OCI-LY7 (cell line): ENCODE measurements at regions of chr5 and their contacts with region 1.

Region 1: GRCh38 chr5:144191998-144192397 is 21.3 kb downstream of the KCTD16 start:
- DNase-seq: peak; percentile 87
- H3K4me3 ChIP-seq: peak overlapping the region; percentile 41
- H3K27ac ChIP-seq: no peak overlapping the region
- H3K4me1 ChIP-seq: peaks cover 26% of the 10 kb centered on the region
- CTCF ChIP-seq: peak; percentile 88

Region 2: DNA sequence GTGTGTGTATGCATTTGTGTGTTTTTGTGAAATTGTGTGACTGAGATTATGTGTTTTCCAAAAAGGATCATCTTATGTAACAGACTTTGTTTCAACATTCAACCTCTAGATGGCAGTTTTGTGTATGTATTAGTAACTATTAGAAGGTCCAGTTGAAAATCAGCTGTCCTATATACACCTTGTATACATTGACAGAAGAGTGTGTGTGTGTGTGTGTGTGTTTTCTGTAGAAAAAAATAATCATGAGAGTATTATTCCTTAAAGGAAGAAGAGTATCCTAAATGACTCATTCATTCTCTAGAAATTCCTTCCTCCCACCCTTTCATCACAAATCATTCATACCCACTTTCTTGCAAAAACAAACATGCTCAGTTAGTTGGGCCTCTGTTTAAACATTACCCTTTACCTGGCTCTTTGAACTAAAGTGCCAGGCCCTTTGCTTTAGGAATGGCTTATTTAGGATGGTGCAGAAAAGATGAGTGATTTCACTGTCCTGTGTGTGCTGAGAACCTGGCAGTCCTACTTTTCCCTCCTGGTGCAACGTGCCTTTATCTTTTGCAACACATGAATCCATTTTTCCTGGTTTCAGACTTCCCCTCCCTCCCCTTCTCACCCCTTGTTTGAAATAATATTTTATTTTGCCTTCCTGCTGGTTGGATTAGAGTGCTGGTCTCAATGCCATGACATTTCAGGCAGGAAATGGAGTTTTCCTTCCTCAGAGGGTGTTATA is 1269.6 kb before region 1 on chr5:
- CTCF ChIA-PET with region 1: no interaction called
- POLR2A ChIA-PET with region 1: no interaction called
- intact Hi-C with region 1: loop called (anchors 10 kb)
- DNase-seq: peak; percentile 64
- H3K4me3 ChIP-seq: no peak overlapping the region
- H3K27ac ChIP-seq: no peak overlapping the region
- H3K4me1 ChIP-seq: no peaks in the 10 kb centered on the region
- CTCF ChIP-seq: peak; percentile 81

Region 3: DNA sequence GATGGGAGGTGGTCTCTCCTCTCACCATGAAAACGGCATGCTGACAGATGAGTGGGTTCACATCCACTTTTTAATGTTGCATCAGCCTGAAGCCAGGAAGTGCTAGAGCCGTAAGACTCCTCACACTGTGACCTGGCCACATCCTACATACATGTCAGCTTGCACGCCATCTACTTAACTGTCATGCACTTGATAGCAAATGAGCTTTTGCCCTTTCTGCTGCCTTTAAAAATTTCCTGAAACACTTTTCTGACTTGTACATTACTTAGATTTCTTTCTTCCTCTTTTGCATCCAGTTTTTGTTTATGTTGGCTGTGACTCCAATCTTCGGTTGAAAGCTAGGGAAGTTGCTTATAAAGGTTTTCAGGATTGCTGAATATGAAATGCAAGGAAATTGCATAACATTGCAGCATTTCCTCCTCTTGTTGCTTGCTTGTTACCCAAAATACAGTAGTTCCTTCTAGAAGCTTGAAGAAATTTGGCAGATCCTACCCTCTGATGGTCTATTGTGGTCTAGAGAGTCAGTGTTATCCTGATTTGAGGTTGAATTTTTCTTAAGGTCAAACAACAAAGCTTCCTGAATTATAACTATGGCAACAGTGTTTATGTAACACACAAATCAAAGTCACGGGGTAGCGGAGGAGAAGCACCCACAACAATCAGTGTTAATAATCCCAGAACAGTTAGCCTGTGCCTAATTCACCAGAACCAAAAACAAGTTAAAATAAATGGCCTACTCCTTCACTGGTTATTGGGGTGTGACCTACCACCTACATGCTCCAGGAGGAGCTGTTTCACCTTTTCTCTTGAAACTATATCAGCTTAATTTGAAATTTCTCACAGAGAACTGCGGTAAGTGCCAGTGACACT is 1189.3 kb before region 1 on chr5:
- CTCF ChIA-PET with region 1: no interaction called
- POLR2A ChIA-PET with region 1: interaction called, 3 read pairs
- intact Hi-C with region 1: loop called (anchors 10 kb)
- DNase-seq: peak; percentile 91
- H3K4me3 ChIP-seq: no peak overlapping the region
- H3K27ac ChIP-seq: peak overlapping the region; percentile 60
- H3K4me1 ChIP-seq: peaks cover 47% of the 10 kb centered on the region
- CTCF ChIP-seq: peak; percentile 75

Region 4: DNA sequence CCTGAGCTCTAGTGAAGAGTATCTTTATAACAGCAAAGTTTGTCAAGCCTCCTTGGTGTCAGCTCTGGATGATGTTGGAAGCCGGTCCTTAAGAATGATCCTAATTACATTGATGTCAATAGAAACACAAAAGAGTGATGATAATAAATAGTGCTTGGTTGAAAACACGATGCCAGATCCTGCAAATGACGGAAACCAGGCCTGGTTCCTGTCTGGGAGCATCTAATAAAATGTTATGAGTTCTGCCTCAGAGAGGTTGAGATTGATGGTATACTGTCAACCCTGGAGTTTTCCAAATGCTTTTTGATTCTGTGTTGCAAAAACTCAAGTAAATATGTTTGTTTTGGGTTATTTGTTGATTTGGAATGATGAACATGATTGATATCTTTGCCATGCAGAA is 356.7 kb before region 1 on chr5:
- CTCF ChIA-PET with region 1: no interaction called
- POLR2A ChIA-PET with region 1: no interaction called
- intact Hi-C with region 1: loop called (anchors 2 kb)
- DNase-seq: no peak
- H3K4me3 ChIP-seq: no peak overlapping the region
- H3K27ac ChIP-seq: no peak overlapping the region
- H3K4me1 ChIP-seq: no peaks in the 10 kb centered on the region
- CTCF ChIP-seq: no peak

Region 5: DNA sequence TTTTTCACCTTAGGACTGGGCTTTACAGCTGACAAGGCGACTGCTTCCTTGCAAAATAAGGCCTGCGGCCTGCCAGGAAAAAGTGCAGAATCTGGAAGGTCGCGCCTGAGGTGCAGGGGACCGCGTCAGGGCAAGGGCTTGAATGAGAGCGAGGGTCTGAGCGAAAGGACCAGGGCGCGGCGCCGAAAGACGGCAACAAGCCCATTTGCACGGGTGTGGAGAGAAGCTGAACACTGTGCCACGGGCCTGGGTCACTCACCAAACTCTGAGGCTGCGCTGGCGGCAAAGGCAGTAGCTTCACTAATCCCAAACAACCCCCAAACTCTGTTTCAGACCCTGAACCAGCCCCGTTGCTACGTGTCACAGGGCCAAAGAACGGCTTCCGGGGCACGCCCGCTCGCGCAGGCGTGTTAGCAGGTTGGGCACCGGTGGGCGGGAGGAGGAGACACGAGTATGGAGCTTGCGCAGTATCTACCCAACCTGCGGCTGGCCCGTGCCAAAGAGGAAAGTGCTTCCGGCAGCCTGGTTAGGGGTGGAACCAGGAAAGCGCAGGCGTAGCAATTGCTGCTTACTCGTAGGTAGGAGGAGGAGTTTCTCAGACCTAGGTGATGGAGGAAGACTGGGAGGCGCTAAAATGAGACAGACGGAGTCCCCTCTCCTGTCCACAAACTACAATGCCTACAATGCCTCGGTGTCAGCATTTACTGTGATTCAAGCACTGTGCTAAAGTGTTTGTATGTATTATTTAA is 21.5 kb before region 1 on chr5 and contains the starts of genes KCTD16 and YIPF5:
- CTCF ChIA-PET with region 1: interaction called, 6 read pairs
- POLR2A ChIA-PET with region 1: interaction called, 58 read pairs
- intact Hi-C with region 1: no loop called
- DNase-seq: peak; percentile 97
- H3K4me3 ChIP-seq: peak within 1 kb of the TSS; percentile 77
- H3K27ac ChIP-seq: peak within 1 kb of the TSS; percentile 5
- H3K4me1 ChIP-seq: peaks cover 18% of the 10 kb centered on the region
- CTCF ChIP-seq: no peak
- total RNA-seq, gene KCTD16: 0.18 and 0.19 TPM in 2 replicates
- total RNA-seq, gene YIPF5: 8.8 and 11.9 TPM in 2 replicates